Calu3 (cell line): ENCODE measurements at regions of chr12 and their contacts with region 1.

Region 1: DNA sequence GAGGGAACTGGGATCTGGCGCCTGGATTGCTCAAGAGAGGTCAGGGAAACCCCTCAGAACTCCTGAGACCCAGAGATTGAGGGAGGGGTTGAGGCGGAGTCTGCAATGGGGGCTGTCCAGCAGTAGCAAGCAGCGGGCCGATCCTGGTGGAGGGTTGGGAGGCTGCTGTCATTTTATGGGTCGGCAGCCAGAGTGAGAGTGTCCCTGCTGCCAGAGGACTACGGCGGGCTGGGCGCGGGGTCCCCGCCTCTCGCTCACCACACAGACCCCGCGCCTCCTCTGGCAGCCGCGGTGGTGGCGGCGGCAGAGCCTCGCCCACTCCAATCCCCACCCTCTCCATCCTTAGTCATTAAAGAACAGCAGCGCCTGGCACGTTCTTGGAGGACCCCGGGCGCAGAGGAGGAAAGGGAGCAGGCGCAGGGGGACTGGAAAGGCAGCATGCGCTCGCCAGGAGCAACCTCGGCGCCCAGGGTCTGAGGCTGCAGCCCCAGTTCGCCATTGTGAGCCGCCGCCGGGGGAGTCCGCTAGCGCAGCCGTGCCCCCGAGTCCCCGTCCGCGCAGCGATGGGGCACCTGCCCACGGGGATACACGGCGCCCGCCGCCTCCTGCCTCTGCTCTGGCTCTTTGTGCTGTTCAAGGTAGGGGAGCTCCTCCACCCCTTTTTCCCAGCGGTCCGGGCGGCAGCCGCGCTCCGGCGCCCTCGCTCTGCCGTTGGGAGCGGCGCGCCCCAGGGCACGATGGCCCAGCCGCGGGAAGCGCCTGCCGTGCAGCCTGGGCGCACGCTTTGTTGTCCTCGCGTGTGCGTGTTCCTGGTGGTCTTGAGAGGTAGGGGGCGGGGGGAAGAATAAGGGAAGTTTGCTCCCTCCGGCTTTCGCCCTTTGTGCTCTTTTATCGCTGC is at the start of gene PTPRO:
- DNase-seq: peak; percentile 50
- H3K4me3 Mint-ChIP-seq: peak within 1 kb of the TSS; percentile 50
- H3K27ac Mint-ChIP-seq: no peak within 1 kb of the TSS
- H3K4me1 Mint-ChIP-seq: no peaks in the 10 kb centered on the region
- H3K27me3 Mint-ChIP-seq: peaks cover 49% of the 10 kb centered on the region
- CTCF ChIP-seq: no peak
- total RNA-seq, gene PTPRO: 0.24 TPM in 1 of 2 replicates, not detected in the other

Region 2: GRCh38 chr12:15289192-15289591 is 33.2 kb before region 1 on chr12:
- CTCF ChIA-PET with region 1: no interaction called
- intact Hi-C with region 1: loop called (anchors 1 kb)
- DNase-seq: no peak
- H3K4me3 Mint-ChIP-seq: no peak overlapping the region
- H3K27ac Mint-ChIP-seq: no peak overlapping the region
- H3K4me1 Mint-ChIP-seq: peaks cover 8% of the 10 kb centered on the region
- H3K27me3 Mint-ChIP-seq: no peaks in the 10 kb centered on the region
- CTCF ChIP-seq: no peak